Panc1 (cell line): ENCODE measurements at regions of chr15 and their contacts with region 1.

Region 1: GRCh38 chr15:64513823-64514222 is 53.4 kb downstream of the ZNF609 start:
- DNase-seq: no peak
- ATAC-seq: no peak
- H3K4me3 ChIP-seq: no peak overlapping the region
- H3K27ac ChIP-seq: no peak overlapping the region
- H3K4me1 ChIP-seq: no peaks in the 10 kb centered on the region
- H3K27me3 ChIP-seq: no peaks in the 10 kb centered on the region
- CTCF ChIP-seq: no peak

Region 2: GRCh38 chr15:65244638-65245037 is 730.8 kb after region 1 on chr15:
- CTCF ChIA-PET with region 1: interaction called, 16 read pairs
- POLR2A ChIA-PET with region 1: no interaction called
- in situ Hi-C with region 1: no loop called
- intact Hi-C with region 1: no loop called
- DNase-seq: no peak
- ATAC-seq: no peak
- H3K4me3 ChIP-seq: no peak overlapping the region
- H3K27ac ChIP-seq: no peak overlapping the region
- H3K4me1 ChIP-seq: no peaks in the 10 kb centered on the region
- H3K27me3 ChIP-seq: no peaks in the 10 kb centered on the region
- CTCF ChIP-seq: no peak